Mammary epithelial cell (primary cell): ENCODE measurements at regions of chr3 and their contacts with region 1.

Region 1: GRCh38 chr3:138082085-138082991 is 33.1 kb downstream of the DZIP1L start:
- DNase-seq: peak; percentile 96
- H3K4me3 ChIP-seq: no peak overlapping the region
- H3K27ac ChIP-seq: peak overlapping the region; percentile 85
- H3K4me1 ChIP-seq: peaks cover 60% of the 10 kb centered on the region
- H3K27me3 ChIP-seq: no peaks in the 10 kb centered on the region
- CTCF ChIP-seq: no peak

Region 2: DNA sequence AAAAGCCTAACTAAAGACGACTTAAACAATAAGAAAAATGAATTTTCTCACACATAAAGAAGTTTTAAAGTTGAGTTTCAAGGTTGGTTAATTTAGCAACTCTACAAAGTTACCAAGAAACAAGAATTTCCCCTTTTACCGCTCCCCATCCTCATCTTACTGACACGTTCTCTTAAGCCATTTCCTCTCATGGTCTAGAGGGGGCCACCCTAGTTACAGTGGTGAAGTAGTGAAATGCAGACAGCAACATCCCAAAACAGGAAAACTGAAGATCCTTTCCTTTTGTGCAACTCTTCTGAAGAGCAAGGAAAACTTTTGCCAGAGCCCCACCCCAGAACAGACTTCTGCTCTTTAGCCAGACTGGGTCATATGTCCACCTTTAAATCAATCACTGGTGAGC is 335.5 kb before region 1 on chr3:
- CTCF ChIA-PET with region 1: no interaction called
- dilution Hi-C with region 1: no loop called
- in situ Hi-C with region 1: no loop called
- intact Hi-C with region 1: no loop called
- DNase-seq: no peak
- H3K4me3 ChIP-seq: no peak overlapping the region
- H3K27ac ChIP-seq: no peak overlapping the region
- H3K4me1 ChIP-seq: no peaks in the 10 kb centered on the region
- H3K27me3 ChIP-seq: no peaks in the 10 kb centered on the region
- CTCF ChIP-seq: no peak

Region 3: DNA sequence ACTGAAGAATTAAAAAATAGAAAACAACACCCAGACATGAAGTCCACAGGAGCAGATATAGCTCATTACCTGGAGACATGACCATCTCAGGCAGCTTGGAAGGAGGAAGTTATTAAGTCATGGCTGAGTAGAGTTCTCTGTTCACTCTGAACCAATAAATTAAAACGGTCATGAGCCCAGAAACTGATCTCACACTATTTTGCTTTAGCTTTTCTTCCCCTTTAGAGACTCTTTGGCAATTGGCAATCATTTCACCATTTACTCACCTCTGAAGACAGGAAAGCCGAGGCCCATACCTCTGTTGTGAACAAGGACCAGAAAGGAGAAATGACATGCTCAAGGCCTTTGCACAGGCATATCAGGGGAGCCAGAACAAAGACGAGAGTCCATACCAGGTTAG is 45.8 kb before region 1 on chr3:
- CTCF ChIA-PET with region 1: no interaction called
- dilution Hi-C with region 1: loop called (anchors 5 kb)
- in situ Hi-C with region 1: no loop called
- intact Hi-C with region 1: no loop called
- DNase-seq: no peak
- H3K4me3 ChIP-seq: no peak overlapping the region
- H3K27ac ChIP-seq: no peak overlapping the region
- H3K4me1 ChIP-seq: peaks cover 1% of the 10 kb centered on the region
- H3K27me3 ChIP-seq: no peaks in the 10 kb centered on the region
- CTCF ChIP-seq: no peak